ENCODE measurements at regions of chr10 and their contacts with region 1.

Region 1: GRCh38 chr10:94591461-94592205 is 46.0 kb downstream of the HELLS start:
- DNase-seq: no peak
- ATAC-seq: peak; percentile 85
- H3K4me3 Mint-ChIP-seq: peak overlapping the region; percentile 30
- H3K27ac Mint-ChIP-seq: peak overlapping the region; percentile 58
- H3K4me1 Mint-ChIP-seq: peaks cover 17% of the 10 kb centered on the region
- H3K27me3 Mint-ChIP-seq: no peaks in the 10 kb centered on the region

Region 2: DNA sequence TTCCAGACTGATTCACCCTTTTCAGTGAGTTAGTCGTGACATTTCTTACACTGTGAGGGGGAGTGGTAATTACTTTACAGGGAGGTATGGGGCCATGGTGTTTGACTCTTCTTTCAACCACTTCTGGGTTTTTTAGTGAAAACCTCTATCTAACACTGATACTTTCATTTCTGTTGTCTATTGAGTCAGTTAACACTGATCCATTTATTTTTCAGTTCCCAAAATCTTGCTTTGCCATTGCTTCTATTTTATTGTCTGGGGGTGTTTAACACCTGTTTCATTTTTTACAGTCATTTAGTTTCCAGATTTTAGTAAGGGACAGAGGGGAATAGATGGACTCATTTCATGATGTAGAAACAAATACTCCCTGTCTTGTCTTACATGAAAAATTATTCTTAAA is 15.5 kb after region 1 on chr10:
- CTCF ChIA-PET with region 1: interaction called, 4 read pairs
- POLR2A ChIA-PET with region 1: no interaction called
- intact Hi-C with region 1: loop called (anchors 1 kb)
- DNase-seq: no peak
- ATAC-seq: peak; percentile 93
- H3K4me3 Mint-ChIP-seq: no peak overlapping the region
- H3K27ac Mint-ChIP-seq: peak overlapping the region; percentile 72
- H3K4me1 Mint-ChIP-seq: peaks cover 24% of the 10 kb centered on the region
- H3K27me3 Mint-ChIP-seq: no peaks in the 10 kb centered on the region

Region 3: GRCh38 chr10:94706089-94706488 is 114.5 kb after region 1 on chr10:
- CTCF ChIA-PET with region 1: no interaction called
- POLR2A ChIA-PET with region 1: no interaction called
- intact Hi-C with region 1: no loop called
- DNase-seq: no peak
- ATAC-seq: no peak
- H3K4me3 Mint-ChIP-seq: no peak overlapping the region
- H3K27ac Mint-ChIP-seq: no peak overlapping the region
- H3K4me1 Mint-ChIP-seq: no peaks in the 10 kb centered on the region
- H3K27me3 Mint-ChIP-seq: no peaks in the 10 kb centered on the region

Region 4: DNA sequence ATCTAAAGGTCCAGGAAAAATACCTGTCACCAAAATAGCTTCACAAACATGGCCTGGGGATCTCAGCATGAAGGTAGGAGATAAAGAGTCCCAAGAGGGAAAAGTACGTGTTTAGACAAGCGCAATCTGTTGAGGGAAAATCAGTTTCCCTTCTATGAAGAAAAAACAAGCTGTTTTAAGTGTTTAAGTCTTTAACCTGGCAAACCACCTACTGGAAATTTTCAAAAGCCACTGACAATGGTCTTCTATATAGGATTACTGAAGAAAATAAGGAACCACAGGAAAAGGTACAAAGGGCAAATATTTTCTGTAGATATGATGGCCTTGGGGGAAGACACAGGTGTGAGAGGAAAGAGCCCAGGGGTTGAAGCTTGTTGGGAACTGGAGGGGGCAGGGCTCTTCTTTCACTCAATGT is 1043.7 kb after region 1 on chr10:
- CTCF ChIA-PET with region 1: no interaction called
- POLR2A ChIA-PET with region 1: no interaction called
- intact Hi-C with region 1: loop called in 1 of 2 experiments (anchors 10 kb)
- DNase-seq: no peak
- ATAC-seq: no peak
- H3K4me3 Mint-ChIP-seq: no peak overlapping the region
- H3K27ac Mint-ChIP-seq: no peak overlapping the region
- H3K4me1 Mint-ChIP-seq: no peaks in the 10 kb centered on the region
- H3K27me3 Mint-ChIP-seq: no peaks in the 10 kb centered on the region

Measured in activated CD4-positive, alpha-beta T cell treated with anti-CD3 and anti-CD28 coated beads for 36 hours (primary cell).